GM12878 (cell line): ENCODE measurements at regions of chr1 and their contacts with region 1.

Region 1: GRCh38 chr1:201468844-201469511 is at the start of gene PHLDA3:
- DNase-seq: no peak
- ATAC-seq: peak; percentile 88
- H3K4me3 ChIP-seq: peak within 1 kb of the TSS; percentile 96
- H3K27ac ChIP-seq: peak within 1 kb of the TSS; percentile 67
- H3K4me1 ChIP-seq: peaks cover 11% of the 10 kb centered on the region
- H3K27me3 ChIP-seq: no peaks in the 10 kb centered on the region
- CTCF ChIP-seq: no peak
- EP300 ChIP-seq: 0 out of 4 replicates have a peak, but pooled peaks of 1 of the 2 experiments have one; percentile 17
- POLR2A ChIP-seq: peak; percentile 89
- RAD21 ChIP-seq: no peak
- polyA plus RNA-seq, gene PHLDA3: 0.60 to 2.0 TPM

Region 2: DNA sequence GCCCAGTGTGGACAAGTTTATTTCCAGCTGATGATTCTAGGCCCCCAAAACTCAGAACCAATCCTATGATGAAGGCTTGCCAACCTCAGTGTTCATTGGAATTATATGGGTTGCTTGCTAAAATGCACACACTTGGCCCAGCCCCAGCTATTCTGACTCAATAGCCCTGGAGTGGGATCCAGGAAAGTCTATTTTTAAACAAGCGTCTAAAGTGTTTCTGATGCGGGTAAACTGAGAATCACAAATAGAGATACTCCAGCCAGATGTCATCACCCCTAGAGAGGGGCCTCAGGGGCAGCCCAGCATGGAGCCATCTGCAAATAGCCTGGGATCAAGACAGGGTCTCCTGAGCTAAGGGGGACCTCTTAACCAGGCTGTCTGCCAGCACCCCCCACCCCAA is 139.7 kb before region 1 on chr1:
- CTCF ChIA-PET with region 1: no interaction called
- POLR2A ChIA-PET with region 1: no interaction called
- RAD21 ChIA-PET with region 1: no interaction called
- SMC1A ChIA-PET with region 1: no interaction called
- in situ Hi-C with region 1: no loop called
- intact Hi-C with region 1: no loop called
- DNase-seq: no peak
- ATAC-seq: no peak
- H3K4me3 ChIP-seq: no peak overlapping the region
- H3K27ac ChIP-seq: no peak overlapping the region
- H3K4me1 ChIP-seq: no peaks in the 10 kb centered on the region
- H3K27me3 ChIP-seq: peaks cover 3 to 4% of the 10 kb centered on the region in 2 experiments; a peak in 2 of 4 replicates
- CTCF ChIP-seq: no peak
- EP300 ChIP-seq: no peak
- POLR2A ChIP-seq: no peak
- RAD21 ChIP-seq: no peak

Region 3: DNA sequence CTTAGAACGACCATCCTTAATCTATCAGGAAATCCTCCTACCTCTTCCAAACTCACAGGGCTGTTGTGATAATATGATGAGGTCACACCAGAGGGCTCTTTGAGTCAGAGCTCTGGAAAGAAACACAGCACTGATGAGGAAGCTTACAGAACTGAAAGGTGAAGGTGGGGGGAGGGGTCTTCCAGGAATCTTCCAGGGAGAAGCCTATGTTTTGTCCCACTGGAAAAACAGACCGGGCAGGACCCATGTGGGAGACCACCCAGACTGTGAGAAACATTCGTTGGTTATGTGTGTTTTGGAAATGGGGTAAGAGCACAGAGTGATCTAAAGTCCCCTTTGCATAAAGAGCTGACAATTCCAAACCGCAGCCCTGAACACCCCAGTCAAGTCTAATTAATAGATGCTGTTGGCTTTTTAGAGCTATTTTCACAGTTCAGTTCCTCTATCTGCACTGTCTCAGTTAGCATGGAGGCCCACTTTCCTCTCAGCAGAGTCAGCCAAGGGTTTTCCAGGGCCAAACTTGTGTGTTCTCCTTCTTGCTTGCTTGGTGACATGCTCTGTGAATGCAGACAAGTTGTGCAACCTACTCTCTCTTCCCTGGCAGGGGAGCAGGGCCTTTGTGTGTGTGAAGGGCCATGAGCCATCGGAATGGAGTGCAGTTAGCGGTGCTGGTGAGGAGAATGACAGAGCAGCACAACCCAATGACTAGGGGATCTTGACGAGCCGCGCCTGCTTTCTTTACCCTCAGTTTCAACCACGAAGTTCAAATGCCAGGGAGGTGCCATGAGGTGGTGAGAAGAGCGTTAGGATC is 12.3 kb before region 1 on chr1:
- CTCF ChIA-PET with region 1: interaction called, 14 read pairs
- POLR2A ChIA-PET with region 1: interaction called, 20 read pairs
- RAD21 ChIA-PET with region 1: interaction called, 16 read pairs
- SMC1A ChIA-PET with region 1: interaction called, 15 read pairs
- in situ Hi-C with region 1: no loop called
- intact Hi-C with region 1: no loop called
- DNase-seq: no peak
- ATAC-seq: peak; percentile 54
- H3K4me3 ChIP-seq: 0 out of 2 replicates have a peak overlapping the region, but pooled peaks have one; percentile 14
- H3K27ac ChIP-seq: no peak overlapping the region; the same call in 1 of the 2 replicates
- H3K4me1 ChIP-seq: peaks cover 31% of the 10 kb centered on the region
- H3K27me3 ChIP-seq: no peaks in the 10 kb centered on the region
- CTCF ChIP-seq: no peak
- EP300 ChIP-seq: no peak
- POLR2A ChIP-seq: no peak
- RAD21 ChIP-seq: no peak

Region 4: DNA sequence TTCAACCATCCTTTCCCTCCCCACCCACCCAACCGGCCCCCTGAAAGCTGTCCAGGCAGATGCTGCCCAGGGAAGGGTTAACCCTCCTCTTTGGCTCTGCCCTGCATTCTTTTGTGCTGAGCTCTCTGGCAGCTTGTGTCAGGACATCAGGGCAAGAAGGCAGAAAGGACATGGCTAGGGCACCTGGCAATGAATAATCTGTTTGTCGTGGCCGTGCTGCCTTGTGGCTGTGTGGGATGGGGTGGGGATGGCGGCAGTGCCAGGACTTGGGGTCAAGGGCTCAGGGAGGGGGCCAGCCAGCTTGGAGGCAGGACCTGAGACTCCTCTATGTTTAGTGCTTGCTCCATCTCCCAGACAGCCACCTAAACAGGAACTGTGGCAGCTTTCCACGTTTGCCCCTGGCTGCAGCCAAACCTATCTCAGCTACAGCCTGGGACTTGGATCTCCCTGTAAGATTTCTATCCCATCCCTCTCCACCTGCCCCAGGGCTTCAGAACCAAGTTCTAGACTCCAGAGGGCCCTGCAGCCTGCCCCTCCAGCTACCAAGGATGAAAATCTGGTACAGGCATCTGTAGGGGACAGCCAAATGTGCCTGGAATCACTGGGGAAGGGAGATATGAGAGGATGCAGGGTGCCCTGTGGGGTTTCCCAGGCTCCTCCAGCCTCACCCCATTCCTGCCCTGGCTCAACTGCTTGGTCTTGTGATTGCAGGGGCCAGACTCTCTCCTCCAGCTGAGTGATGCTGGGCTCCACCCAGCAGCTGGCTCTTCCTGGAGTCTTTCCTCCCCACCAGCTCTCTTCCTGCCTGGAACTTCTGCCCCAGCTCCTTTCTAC is 644.1 kb after region 1 on chr1:
- CTCF ChIA-PET with region 1: no interaction called
- POLR2A ChIA-PET with region 1: no interaction called
- RAD21 ChIA-PET with region 1: no interaction called
- SMC1A ChIA-PET with region 1: no interaction called
- in situ Hi-C with region 1: no loop called
- intact Hi-C with region 1: no loop called
- DNase-seq: no peak
- ATAC-seq: peak; percentile 24
- H3K4me3 ChIP-seq: no peak overlapping the region
- H3K27ac ChIP-seq: no peak overlapping the region
- H3K4me1 ChIP-seq: peaks cover 14% of the 10 kb centered on the region
- H3K27me3 ChIP-seq: no peaks in the 10 kb centered on the region
- CTCF ChIP-seq: no peak
- EP300 ChIP-seq: no peak
- POLR2A ChIP-seq: no peak
- RAD21 ChIP-seq: no peak